GM12878 (cell line): ENCODE measurements at regions of chr14 and their contacts with region 1.

Region 1: DNA sequence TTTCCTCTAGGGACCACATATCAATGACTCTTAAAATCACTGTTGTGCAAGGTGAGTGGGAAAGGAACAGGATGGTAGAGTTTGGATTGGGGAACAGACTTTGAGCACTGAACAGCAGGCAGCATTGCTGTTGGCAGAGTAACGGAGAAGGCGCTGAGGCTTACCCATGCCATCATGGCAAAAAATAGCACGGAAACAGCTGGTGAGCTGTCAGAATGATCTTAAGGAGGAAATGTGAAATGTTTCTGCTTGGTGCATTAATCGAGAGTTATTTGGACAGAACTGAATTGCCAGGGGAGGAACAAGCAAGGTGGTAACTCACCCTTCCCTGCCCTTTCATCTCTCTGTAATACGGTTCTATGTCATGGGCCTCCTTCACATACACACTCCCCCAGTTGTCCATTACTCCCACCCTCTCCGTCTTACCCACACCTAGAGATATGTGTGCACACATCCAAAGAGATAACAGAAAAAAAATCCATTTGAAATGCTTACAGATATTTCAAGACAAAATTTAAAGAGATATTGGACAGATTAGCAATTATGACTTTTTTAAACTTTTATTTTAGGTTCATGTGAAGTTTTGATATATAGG is 572.5 kb downstream of the DIO2 start:
- DNase-seq: no peak
- ATAC-seq: no peak
- H3K4me3 ChIP-seq: no peak overlapping the region
- H3K27ac ChIP-seq: no peak overlapping the region
- H3K4me1 ChIP-seq: no peaks in the 10 kb centered on the region
- H3K27me3 ChIP-seq: no peaks in the 10 kb centered on the region
- CTCF ChIP-seq: no peak
- EP300 ChIP-seq: no peak
- POLR2A ChIP-seq: no peak
- RAD21 ChIP-seq: no peak

Region 2: GRCh38 chr14:79649856-79650255 is 11.1 kb after region 1 on chr14:
- CTCF ChIA-PET with region 1: no interaction called
- POLR2A ChIA-PET with region 1: no interaction called
- RAD21 ChIA-PET with region 1: no interaction called
- SMC1A ChIA-PET with region 1: no interaction called
- in situ Hi-C with region 1: no loop called
- intact Hi-C with region 1: loop called (anchors 1 kb)
- DNase-seq: no peak
- ATAC-seq: no peak
- H3K4me3 ChIP-seq: no peak overlapping the region
- H3K27ac ChIP-seq: no peak overlapping the region
- H3K4me1 ChIP-seq: no peaks in the 10 kb centered on the region
- H3K27me3 ChIP-seq: no peaks in the 10 kb centered on the region
- CTCF ChIP-seq: no peak
- EP300 ChIP-seq: no peak
- POLR2A ChIP-seq: no peak
- RAD21 ChIP-seq: no peak

Region 3: GRCh38 chr14:79661762-79662161 is 23.0 kb after region 1 on chr14:
- CTCF ChIA-PET with region 1: no interaction called
- POLR2A ChIA-PET with region 1: no interaction called
- RAD21 ChIA-PET with region 1: no interaction called
- SMC1A ChIA-PET with region 1: no interaction called
- in situ Hi-C with region 1: no loop called
- intact Hi-C with region 1: no loop called
- DNase-seq: no peak
- ATAC-seq: no peak
- H3K4me3 ChIP-seq: no peak overlapping the region
- H3K27ac ChIP-seq: no peak overlapping the region
- H3K4me1 ChIP-seq: no peaks in the 10 kb centered on the region
- H3K27me3 ChIP-seq: no peaks in the 10 kb centered on the region
- CTCF ChIP-seq: no peak
- EP300 ChIP-seq: no peak
- POLR2A ChIP-seq: no peak
- RAD21 ChIP-seq: no peak